K562 (cell line): ENCODE measurements at regions of chr1 and their contacts with region 1.

Region 1: DNA sequence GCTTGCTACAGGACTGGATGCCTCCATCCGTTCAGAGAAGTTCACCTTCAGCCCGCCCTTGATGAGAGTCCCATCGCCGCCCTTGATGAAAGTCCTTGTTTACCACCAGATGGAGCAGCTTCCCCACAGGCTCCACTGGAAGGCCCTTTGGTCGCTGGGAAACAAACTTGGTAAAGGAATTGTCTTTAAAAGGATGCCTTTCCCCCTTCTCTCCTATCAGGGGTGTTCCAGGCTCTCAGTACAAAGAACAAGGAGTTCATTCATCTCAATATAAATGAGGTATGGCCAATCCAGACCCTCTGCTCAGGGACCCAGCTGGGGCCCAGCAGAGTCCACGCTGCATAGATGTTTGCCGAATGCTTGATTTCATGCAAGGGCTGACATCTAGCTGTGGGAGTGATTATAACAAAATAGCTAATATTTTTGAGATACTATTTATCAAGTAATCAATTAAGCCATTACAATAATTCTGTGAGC is 50.8 kb downstream of the CAPN9 start:
- DNase-seq: peak; percentile 48 to 74 (median 62)
- ATAC-seq: peak; percentile 95
- H3K4me3 ChIP-seq: no peak overlapping the region
- H3K27ac ChIP-seq: no peak overlapping the region
- H3K4me1 ChIP-seq: no peaks in the 10 kb centered on the region
- H3K27me3 ChIP-seq: peaks cover 22 to 68% of the 10 kb centered on the region in 2 experiments
- CTCF ChIP-seq: peak; percentile 79 to 84 (median 82)
- EP300 ChIP-seq: no peak
- POLR2A ChIP-seq: no peak
- RAD21 ChIP-seq: peak; percentile 90 to 98

Region 2: DNA sequence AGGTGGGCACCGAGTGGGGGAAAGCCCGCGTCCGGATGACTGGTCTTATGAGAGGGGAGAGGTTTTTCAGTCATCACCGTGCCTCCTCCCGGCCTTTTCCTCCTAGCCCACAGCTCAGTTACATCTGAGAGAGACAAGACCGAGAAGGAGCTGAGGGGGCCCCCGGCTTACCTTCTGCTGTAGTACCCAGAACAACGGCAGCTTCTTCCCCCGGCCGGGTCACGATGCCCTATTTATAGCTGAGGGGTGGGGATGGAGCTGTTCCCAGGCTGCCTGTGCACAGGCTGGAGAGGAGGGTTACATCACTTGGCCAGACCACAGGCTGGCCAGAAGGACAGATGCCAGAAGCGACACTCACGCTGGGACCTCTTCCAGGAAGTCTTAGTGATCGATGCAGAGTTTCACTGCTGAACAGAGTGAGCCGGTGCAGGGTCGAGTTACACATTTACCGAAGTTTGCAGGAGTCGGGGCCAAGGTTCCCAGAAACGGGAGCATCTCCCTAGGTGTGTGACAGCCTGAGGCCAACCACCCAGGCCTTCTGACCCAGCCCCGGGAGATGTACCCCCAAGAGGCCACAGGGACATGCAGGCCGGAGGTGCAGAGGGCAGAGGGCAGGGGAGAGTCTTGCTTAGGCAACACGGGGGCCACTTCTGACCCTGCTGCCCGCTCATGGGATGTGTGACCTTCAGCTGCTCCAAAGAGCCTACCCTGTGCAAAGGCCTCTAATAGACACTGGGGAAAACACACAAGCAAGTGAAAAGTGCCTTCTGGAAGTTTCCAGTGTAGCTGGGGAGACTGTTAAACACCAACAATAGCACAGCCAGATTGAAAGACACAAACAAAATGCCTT is 83.8 kb before region 1 on chr1 and contains the start of gene AGT:
- CTCF ChIA-PET with region 1: no interaction called
- POLR2A ChIA-PET with region 1: no interaction called
- in situ Hi-C with region 1: no loop called
- intact Hi-C with region 1: no loop called
- DNase-seq: no peak
- ATAC-seq: peak; percentile 19; the same call in 1 of the 3 replicates
- H3K4me3 ChIP-seq: no peak within 1 kb of the TSS
- H3K27ac ChIP-seq: no peak within 1 kb of the TSS
- H3K4me1 ChIP-seq: peaks cover 0 to 4% of the 10 kb centered on the region in 2 experiments; a peak in 2 of 5 replicates
- H3K27me3 ChIP-seq: peaks cover 37 to 56% of the 10 kb centered on the region in 2 experiments
- CTCF ChIP-seq: no peak
- EP300 ChIP-seq: no peak
- POLR2A ChIP-seq: no peak
- RAD21 ChIP-seq: no peak
- polyA plus RNA-seq, gene AGT: not detected

Region 3: GRCh38 chr1:230917284-230918135 is 119.5 kb after region 1 on chr1:
- CTCF ChIA-PET with region 1: interaction called, 19 read pairs
- POLR2A ChIA-PET with region 1: no interaction called
- in situ Hi-C with region 1: no loop called
- intact Hi-C with region 1: loop called (anchors 1 kb)
- DNase-seq: peak; percentile 72 to 94 (median 74)
- ATAC-seq: peak; percentile 95
- H3K4me3 ChIP-seq: no peak overlapping the region
- H3K27ac ChIP-seq: no peak overlapping the region
- H3K4me1 ChIP-seq: peaks cover 0 to 9% of the 10 kb centered on the region in 2 experiments; a peak in 3 of 5 replicates
- H3K27me3 ChIP-seq: no peaks in the 10 kb centered on the region
- CTCF ChIP-seq: peak; percentile 76 to 92 (median 84)
- EP300 ChIP-seq: no peak
- POLR2A ChIP-seq: no peak
- RAD21 ChIP-seq: peak; percentile 86 to 90

Region 4: GRCh38 chr1:231020139-231020601 is 222.2 kb after region 1 on chr1:
- CTCF ChIA-PET with region 1: no interaction called
- POLR2A ChIA-PET with region 1: no interaction called
- in situ Hi-C with region 1: no loop called
- intact Hi-C with region 1: loop called (anchors 10 kb)
- DNase-seq: no peak
- ATAC-seq: no peak
- H3K4me3 ChIP-seq: no peak overlapping the region
- H3K27ac ChIP-seq: no peak overlapping the region
- H3K4me1 ChIP-seq: no peaks in the 10 kb centered on the region; a peak in 1 of 5 replicates
- H3K27me3 ChIP-seq: no peaks in the 10 kb centered on the region
- CTCF ChIP-seq: no peak
- EP300 ChIP-seq: no peak
- POLR2A ChIP-seq: no peak
- RAD21 ChIP-seq: no peak

Region 5: GRCh38 chr1:231091831-231092301 is 293.9 kb after region 1 on chr1:
- CTCF ChIA-PET with region 1: interaction called, 3 read pairs
- POLR2A ChIA-PET with region 1: no interaction called
- in situ Hi-C with region 1: no loop called
- intact Hi-C with region 1: loop called (anchors 1 kb)
- DNase-seq: peak; percentile 67 to 89 (median 72)
- ATAC-seq: peak; percentile 97
- H3K4me3 ChIP-seq: no peak overlapping the region
- H3K27ac ChIP-seq: no peak overlapping the region
- H3K4me1 ChIP-seq: peaks cover 0 to 5% of the 10 kb centered on the region in 2 experiments; a peak in 4 of 5 replicates
- H3K27me3 ChIP-seq: peaks cover 11 to 18% of the 10 kb centered on the region in 2 experiments; a peak in 4 of 5 replicates
- CTCF ChIP-seq: peak; percentile 94 to 99 (median 97)
- EP300 ChIP-seq: no peak
- POLR2A ChIP-seq: no peak
- RAD21 ChIP-seq: peak; percentile 89 to 97